ENCODE measurements at regions of chr9 and their contacts with region 1.

Region 1: GRCh38 chr9:110183208-110184145 is 24.5 kb downstream of the C9orf152 start:
- DNase-seq: peak; percentile 68
- ATAC-seq: peak; percentile 89
- H3K4me3 ChIP-seq: no peak overlapping the region
- H3K27ac ChIP-seq: no peak overlapping the region
- H3K4me1 ChIP-seq: peaks cover 0 to 26% of the 10 kb centered on the region in 2 experiments; a peak in 2 of 4 replicates
- H3K27me3 ChIP-seq: no peaks in the 10 kb centered on the region
- CTCF ChIP-seq: peak; percentile 74 to 84 (median 81)
- POLR2A ChIP-seq: no peak
- RAD21 ChIP-seq: peak; percentile 94

Region 2: DNA sequence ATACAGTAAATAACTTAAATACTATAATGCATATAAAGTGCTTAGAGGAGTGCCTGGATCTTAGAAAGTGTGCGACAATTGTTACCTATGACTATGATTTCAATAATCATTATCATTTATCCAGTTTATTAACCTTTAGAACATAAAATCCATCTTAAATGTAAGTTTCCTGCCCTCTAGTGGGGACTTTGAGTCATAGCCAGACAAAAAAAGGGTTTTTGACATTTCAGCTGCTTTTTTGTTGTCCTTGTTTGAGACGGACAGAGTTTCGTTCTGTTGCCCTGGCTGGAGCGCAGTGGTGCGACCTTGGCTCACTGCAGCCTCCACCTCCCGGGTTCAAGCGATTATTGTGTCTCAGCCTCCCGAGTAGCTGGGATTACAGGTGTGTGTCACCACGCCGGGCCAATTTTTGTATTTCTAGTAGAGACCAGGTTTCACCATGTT is 34.2 kb after region 1 on chr9:
- CTCF ChIA-PET with region 1: interaction called, 28 read pairs
- POLR2A ChIA-PET with region 1: no interaction called
- RAD21 ChIA-PET with region 1: interaction called in 1 of 2 experiments, 3 read pairs
- intact Hi-C with region 1: loop called (anchors 1 kb)
- DNase-seq: peak; percentile 48
- ATAC-seq: peak; percentile 63
- H3K4me3 ChIP-seq: peak overlapping the region in 1 of 2 experiments; percentile 12; a peak in 1 of 4 replicates
- H3K27ac ChIP-seq: no peak overlapping the region
- H3K4me1 ChIP-seq: 0 out of 4 replicates have a peak, but pooled peaks cover 0 to 2% of the 10 kb centered on the region in 2 experiments
- H3K27me3 ChIP-seq: no peaks in the 10 kb centered on the region; the same call in 1 of the 2 replicates
- CTCF ChIP-seq: peak; percentile 67 to 77 (median 69)
- POLR2A ChIP-seq: no peak
- RAD21 ChIP-seq: peak; percentile 75

Region 3: DNA sequence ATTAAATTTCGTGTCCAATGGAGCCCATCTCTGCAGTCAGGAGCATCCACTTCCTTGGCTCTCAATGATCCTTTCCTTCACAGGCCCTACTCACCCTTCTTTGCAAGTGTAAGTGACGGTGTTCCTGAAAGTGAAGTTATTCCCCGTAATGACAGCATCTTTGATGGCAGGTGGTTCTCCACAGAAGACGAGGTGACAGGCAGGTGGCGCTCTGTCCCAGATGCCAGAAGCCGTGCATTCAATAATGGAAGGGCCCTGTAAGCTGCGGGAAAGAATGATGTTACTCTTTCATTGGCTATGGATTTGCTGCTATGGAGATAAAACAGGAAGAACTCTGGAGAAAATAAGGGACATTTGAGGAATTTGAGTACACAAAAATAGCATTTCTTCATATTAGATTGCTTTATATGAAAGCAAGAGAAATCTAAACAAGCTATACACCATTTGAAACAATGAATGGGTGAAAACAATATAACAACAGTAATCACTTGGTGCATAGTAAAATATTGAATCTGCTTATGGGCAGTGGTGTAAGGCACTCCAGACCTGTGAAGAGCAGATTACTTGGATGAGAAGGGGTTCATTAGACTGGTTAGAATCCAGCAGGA is 244.1 kb after region 1 on chr9:
- CTCF ChIA-PET with region 1: interaction called, 6 read pairs
- POLR2A ChIA-PET with region 1: no interaction called
- RAD21 ChIA-PET with region 1: no interaction called
- intact Hi-C with region 1: loop called (anchors 2 kb)
- DNase-seq: peak; percentile 42
- ATAC-seq: peak; percentile 96
- H3K4me3 ChIP-seq: no peak overlapping the region
- H3K27ac ChIP-seq: no peak overlapping the region
- H3K4me1 ChIP-seq: no peaks in the 10 kb centered on the region
- H3K27me3 ChIP-seq: no peaks in the 10 kb centered on the region
- CTCF ChIP-seq: peak; percentile 54 to 83 (median 71); a peak in 5 of 6 replicates
- POLR2A ChIP-seq: no peak
- RAD21 ChIP-seq: peak; percentile 67